ENCODE measurements at regions of chr9 and their contacts with region 1.

Region 1: GRCh38 chr9:127869310-127870152 is 7.9 kb downstream of the AK1 start:
- DNase-seq: peak; percentile 36
- H3K4me3 ChIP-seq: no peak overlapping the region
- H3K27ac ChIP-seq: no peak overlapping the region
- H3K27me3 ChIP-seq: no peaks in the 10 kb centered on the region
- CTCF ChIP-seq: peak; percentile 89

Region 2: DNA sequence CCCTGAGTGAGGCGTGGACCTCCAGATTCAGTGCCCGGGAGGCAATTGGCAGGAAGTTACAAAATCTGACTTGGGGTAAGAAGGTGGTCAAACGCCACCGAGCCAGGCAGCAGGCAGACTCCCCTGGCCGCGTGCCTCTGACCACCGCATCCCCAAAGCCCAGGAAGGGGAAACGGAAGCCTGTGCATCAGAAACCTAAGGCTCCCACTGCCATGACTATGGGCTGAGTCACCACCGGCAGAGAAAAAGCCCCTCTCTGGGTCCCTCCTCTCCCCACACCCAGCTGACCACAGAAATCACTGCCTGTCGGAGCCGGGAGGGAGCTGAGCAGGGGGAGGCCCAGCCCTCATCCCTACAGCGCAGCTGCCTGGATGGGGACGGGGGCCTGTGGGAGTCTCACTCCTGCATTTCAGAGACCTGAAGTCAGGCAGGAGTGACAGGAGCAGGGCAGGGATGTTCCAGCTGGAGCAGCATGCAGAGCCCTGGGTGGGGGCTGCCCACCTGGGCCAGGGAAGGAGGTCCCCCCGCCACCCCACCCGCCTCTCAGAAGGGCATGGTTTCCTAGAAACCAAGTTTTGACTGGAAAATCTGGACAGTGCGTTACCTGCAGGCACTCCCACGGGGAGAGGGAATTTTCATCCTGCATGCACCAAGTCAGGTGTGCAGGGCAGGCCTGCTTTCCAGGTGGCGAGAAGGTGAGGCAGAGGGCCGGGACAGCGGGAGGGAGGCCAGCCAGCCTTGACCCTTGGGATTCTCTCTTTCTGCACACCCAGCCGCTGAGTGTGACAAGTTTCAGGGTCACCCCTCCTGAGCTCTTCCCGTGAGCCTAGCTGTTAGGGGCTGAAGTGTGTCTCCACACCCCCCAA is 350.0 kb before region 1 on chr9:
- CTCF ChIA-PET with region 1: interaction called, 11 read pairs
- POLR2A ChIA-PET with region 1: no interaction called
- DNase-seq: peak; percentile 91
- H3K4me3 ChIP-seq: no peak overlapping the region
- H3K27ac ChIP-seq: peak overlapping the region; percentile 96
- H3K27me3 ChIP-seq: no peaks in the 10 kb centered on the region
- CTCF ChIP-seq: no peak

Region 3: GRCh38 chr9:127770905-127771569 is 98.5 kb before region 1 on chr9:
- CTCF ChIA-PET with region 1: interaction called, 12 read pairs
- POLR2A ChIA-PET with region 1: no interaction called
- DNase-seq: peak; percentile 92
- H3K4me3 ChIP-seq: peak overlapping the region; percentile 53
- H3K27ac ChIP-seq: no peak overlapping the region
- H3K27me3 ChIP-seq: no peaks in the 10 kb centered on the region
- CTCF ChIP-seq: no peak

Region 4: DNA sequence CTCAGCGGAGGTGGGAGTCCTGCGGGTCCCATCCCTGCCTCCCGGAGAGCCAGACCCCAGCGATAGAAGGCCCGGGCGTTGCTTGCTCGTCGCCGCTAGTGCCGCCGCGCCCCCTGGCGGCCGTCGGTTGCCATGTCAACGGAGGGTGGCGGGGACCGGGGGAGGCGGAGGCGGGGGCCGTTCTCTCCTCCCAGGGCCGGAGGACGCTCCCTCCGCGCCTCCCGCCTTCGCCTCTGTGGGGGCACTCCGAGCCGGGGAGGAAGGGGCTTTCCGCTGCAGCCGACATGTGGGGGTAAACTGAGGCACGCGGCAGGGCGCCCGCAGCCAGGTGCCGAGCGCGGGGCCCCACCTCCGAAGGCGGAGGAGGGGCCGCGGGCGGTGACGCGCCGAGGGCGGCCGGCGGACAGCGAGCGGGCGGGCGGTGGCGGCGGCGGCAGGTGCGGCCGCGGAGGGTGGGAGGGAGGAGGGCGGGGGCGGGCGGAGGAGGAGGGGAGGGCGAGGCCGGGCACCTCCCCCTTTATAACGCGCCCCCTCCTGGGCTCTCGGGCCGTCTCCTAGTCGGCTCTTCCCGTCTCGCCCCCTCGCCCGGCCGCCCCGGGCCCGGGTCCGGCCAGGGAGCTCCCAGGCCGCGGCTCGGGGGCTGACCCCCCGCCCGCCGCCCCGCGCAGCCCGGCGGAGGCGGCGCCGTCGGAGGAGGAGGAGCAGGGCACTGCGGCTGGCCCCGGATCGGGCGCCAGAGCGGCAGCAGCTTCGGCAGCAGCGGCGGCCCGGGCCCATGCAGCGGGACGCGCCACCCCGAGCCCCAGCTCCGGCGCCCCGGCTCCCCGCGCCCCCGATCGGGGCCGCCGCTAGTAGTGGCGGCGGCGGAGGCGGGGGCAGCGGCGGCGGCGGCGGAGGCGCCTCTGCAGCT is 84.3 kb before region 1 on chr9:
- CTCF ChIA-PET with region 1: interaction called, 11 read pairs
- POLR2A ChIA-PET with region 1: interaction called, 7 read pairs
- DNase-seq: no peak
- H3K4me3 ChIP-seq: peak overlapping the region; percentile 68
- H3K27ac ChIP-seq: no peak overlapping the region
- H3K27me3 ChIP-seq: peaks cover 3% of the 10 kb centered on the region
- CTCF ChIP-seq: peak; percentile 72

Region 5: DNA sequence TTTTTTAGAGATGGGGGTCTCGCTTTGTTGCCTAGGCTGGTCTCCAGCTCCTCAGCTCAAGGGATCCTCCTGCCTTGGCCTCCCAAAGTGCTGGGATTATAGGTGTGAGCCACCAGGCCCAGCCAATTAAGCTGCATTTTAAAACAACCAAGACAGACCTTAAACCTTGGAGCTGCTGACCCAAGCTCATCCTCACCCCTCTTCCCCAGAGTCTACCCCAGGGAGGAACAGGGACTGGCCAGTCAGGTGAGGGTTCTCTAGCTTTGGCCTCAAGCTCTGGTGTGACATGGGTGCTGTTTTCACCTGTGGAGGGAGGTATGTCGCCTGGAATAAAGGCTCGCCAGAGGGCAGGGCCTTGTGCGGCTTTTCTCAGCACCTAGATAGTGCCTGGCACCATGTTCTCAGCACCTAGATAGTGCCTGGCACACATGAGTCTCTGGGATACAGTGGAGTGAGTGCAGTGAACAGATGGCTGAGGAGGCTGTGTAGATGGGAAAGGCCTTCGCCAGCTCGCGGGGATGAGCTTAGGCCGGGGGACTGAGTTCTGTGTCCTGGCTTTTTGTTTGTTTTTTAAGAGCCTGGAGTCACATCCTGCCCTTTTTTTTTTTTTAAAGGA is 76.3 kb before region 1 on chr9:
- CTCF ChIA-PET with region 1: interaction called, 12 read pairs
- POLR2A ChIA-PET with region 1: no interaction called
- DNase-seq: no peak
- H3K4me3 ChIP-seq: no peak overlapping the region
- H3K27ac ChIP-seq: peak overlapping the region; percentile 78
- H3K27me3 ChIP-seq: no peaks in the 10 kb centered on the region
- CTCF ChIP-seq: no peak

Region 6: DNA sequence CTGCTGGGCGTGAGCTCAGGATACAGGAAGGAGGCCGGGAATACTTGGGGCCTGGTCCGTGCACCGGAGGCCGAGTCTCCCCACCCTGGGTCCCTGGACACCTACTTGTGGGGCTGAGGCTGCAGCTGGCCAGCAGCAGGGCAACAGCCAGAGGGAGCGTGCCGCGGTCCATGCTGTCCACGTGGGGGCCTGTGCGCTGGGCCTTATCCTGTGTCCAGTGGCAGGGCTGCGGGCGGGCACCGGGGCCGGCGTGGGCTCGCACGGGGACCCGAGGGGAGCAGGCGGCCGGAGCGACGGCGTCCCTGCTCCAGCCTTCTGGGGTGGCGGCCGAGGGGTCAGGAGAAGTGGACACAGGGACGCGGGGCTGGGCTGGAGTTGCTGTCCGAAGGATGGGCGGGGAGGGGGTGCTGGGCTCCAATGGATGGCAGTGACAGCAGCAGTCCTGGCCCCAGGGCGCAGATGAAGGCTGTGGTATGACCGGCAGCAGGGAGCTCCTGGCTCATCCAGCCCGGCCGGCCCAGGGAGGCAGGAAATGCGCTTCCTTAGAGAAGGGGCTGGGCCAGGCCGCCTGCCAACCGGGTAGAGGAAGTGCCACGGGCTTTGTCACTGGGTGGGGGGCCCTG is 15.2 kb before region 1 on chr9 and contains the start of gene ENG:
- CTCF ChIA-PET with region 1: interaction called, 11 read pairs
- POLR2A ChIA-PET with region 1: interaction called, 7 read pairs
- DNase-seq: no peak
- H3K4me3 ChIP-seq: peak within 1 kb of the TSS; percentile 79
- H3K27ac ChIP-seq: peak within 1 kb of the TSS; percentile 86
- H3K27me3 ChIP-seq: no peaks in the 10 kb centered on the region
- CTCF ChIP-seq: peak; percentile 21; the same call in 1 of the 2 replicates
- polyA plus RNA-seq, gene ENG: 17.2 and 34.2 TPM in 2 replicates

Region 7: GRCh38 chr9:127916665-127917613 is 47.4 kb after region 1 on chr9 and contains the start of gene ST6GALNAC4:
- CTCF ChIA-PET with region 1: interaction called, 18 read pairs
- POLR2A ChIA-PET with region 1: interaction called, 3 read pairs
- DNase-seq: peak; percentile 70
- H3K4me3 ChIP-seq: peak within 1 kb of the TSS; percentile 80
- H3K27ac ChIP-seq: peak within 1 kb of the TSS; percentile 21
- H3K27me3 ChIP-seq: no peaks in the 10 kb centered on the region
- CTCF ChIP-seq: no peak
- polyA plus RNA-seq, gene ST6GALNAC4: 15.0 and 24.3 TPM in 2 replicates

Region 8: DNA sequence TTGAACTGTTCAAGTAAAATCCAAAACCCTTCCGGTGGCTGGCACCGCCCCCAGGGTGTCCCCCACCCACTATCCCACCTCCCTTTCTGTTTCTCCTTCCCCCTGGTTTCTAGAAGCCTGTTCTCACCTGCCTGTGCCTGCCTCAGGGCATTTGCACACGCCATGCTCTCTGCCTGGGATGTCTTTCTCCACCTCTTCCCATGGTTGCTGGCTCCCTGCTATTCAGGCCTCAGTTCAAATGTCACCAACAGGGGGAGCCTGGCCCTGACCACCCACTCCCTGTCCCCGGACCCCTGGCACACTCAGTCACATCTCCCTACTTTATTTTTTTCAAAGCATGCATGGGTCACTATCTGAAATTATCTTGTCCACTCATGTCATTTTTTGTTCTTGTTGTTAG is 151.2 kb after region 1 on chr9:
- CTCF ChIA-PET with region 1: no interaction called
- POLR2A ChIA-PET with region 1: no interaction called
- DNase-seq: no peak
- H3K4me3 ChIP-seq: no peak overlapping the region
- H3K27ac ChIP-seq: no peak overlapping the region
- H3K27me3 ChIP-seq: no peaks in the 10 kb centered on the region
- CTCF ChIP-seq: 0 out of 2 replicates have a peak, but pooled peaks have one; percentile 20